Tibial artery (tissue), 4 donors: ENCODE measurements at regions of chr4 and their contacts with region 1.

Region 1: DNA sequence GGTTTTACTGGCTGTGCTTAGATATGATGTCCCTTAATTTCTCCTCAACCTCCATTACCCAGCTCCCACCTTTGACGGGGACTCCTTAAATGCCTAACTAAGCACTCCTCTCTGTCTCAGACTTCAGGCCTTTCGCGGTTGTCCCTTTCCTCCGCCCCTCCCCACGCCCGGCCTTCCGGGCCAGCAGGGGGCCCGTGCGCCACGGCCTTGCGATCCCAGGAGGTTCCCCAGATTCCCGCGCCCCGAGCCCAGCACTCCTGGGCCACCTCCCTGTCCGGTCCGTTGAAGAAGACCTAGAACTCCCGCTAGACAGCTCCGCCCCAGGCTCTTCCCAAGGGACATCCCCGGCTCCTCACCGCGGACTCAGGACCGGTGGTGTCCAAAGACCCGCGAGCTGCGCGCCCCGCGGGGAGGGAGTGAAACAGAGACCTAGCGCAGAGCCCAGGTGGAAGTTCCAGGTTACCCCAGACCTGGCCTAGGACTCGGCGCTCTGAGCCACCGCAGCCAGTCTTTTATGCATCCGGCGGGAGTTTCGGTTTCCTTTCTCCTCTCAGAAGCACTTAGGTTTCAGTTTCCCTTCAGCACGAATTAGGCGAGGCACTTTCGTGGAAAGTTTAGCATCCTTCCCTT is at the start of gene DDX60:
- DNase-seq: peak; percentile 55 to 83
- H3K4me3 ChIP-seq: peak within 1 kb of the TSS; percentile 75 to 85
- H3K27ac ChIP-seq: peak within 1 kb of the TSS; percentile 94 to 97
- H3K4me1 ChIP-seq: peaks cover 0 to 9% (median 3%) of the 10 kb centered on the region in 4 donors
- H3K27me3 ChIP-seq: no peaks in the 10 kb centered on the region
- CTCF ChIP-seq: peak; percentile 39 to 41

Region 2: GRCh38 chr4:168129046-168129772 is 189.2 kb before region 1 on chr4:
- intact Hi-C with region 1: no loop called
- DNase-seq: no peak
- H3K4me3 ChIP-seq: no peak overlapping the region
- H3K27ac ChIP-seq: no peak overlapping the region
- H3K4me1 ChIP-seq: no peaks in the 10 kb centered on the region
- H3K27me3 ChIP-seq: no peaks in the 10 kb centered on the region
- CTCF ChIP-seq: no peak

Region 3: GRCh38 chr4:168480931-168481611 is 162.7 kb after region 1 on chr4:
- intact Hi-C with region 1: loop called (anchors 10 kb)
- DNase-seq: no peak
- H3K4me3 ChIP-seq: peak overlapping the region; percentile 74 to 78
- H3K27ac ChIP-seq: peak overlapping the region; percentile 92 to 94
- H3K4me1 ChIP-seq: peaks cover 0 to 9% (median 2%) of the 10 kb centered on the region in 4 donors
- H3K27me3 ChIP-seq: no peaks in the 10 kb centered on the region
- CTCF ChIP-seq: no peak